Activated CD8-positive, alpha-beta T cell treated with anti-CD3 and anti-CD28 coated beads, Interleukin-2, amount 10 ng/mL, durations not matched to agents 7 days and 5 days (primary cell): ENCODE measurements at regions of chr2 and their contacts with region 1.

Region 1: DNA sequence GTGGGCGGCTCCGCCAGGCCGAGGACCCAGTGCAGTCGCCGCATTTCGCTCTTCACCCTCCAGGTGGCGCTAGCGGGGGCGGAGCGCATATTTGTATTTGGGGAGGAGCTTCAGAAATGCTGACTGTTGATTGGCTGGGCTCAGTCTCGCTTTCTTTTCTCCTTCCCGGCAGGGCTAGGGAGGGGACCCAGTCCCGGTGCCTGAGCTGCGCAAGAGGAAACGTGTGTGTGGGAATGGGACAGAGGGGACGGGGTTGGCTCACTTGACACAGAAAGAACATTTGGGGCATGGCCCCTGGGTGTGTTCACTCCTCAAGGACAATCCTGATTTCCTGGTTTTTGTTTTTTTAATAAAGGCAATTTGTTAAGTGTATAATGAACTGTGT is 20.3 kb upstream of the DNMT3A start:
- DNase-seq: peak; percentile 96
- ATAC-seq: peak; percentile 98
- H3K4me3 Mint-ChIP-seq: peak overlapping the region; percentile 82
- H3K27ac Mint-ChIP-seq: peak overlapping the region; percentile 93
- H3K4me1 Mint-ChIP-seq: peaks cover 20% of the 10 kb centered on the region
- H3K27me3 Mint-ChIP-seq: no peaks in the 10 kb centered on the region

Region 2: DNA sequence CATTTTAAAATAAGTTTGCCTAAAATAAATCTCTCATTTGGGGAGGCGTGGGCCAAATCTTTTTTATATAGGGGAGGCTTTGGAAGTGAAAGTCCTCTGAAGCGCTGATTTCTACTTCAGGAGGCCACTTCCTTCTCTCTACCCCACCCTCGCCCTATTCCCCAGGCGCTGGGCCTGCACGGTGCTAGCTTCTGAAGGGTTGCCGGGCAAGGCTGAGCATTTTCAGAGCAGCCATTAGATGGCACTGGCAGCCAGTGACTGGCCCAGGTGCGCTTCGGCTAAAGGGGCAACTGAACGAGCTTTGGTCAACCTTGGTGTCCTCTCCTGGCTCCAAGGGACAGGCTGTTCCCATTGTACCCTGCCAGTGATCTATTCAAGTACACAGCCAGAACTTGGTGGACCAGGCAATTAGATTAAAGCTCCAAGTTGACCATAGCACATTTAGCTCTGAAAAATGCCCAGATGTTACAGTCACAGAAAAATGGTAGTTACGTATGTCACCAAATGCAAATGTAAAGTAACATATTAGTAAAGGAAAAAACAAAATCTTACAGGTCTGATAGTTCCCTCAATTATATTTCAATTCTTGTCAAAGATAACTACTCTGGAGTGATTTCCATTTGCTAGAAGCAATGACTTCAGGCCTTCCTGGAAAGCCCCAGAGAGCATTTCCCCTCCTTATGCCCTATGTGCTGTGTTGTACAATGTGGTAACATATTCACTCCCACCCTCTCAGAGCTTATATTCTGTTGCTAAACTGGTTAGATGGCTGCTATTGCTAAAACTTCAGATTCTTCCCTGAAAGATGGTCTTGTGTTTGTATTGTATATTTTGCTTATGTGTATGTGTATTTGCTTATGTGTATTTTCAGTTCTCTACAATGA is 195.8 kb before region 1 on chr2:
- CTCF ChIA-PET with region 1: interaction called, 11 read pairs
- POLR2A ChIA-PET with region 1: no interaction called
- DNase-seq: peak; percentile 70
- ATAC-seq: peak; percentile 68
- H3K4me3 Mint-ChIP-seq: no peak overlapping the region
- H3K27ac Mint-ChIP-seq: no peak overlapping the region
- H3K4me1 Mint-ChIP-seq: peaks cover 27% of the 10 kb centered on the region
- H3K27me3 Mint-ChIP-seq: peaks cover 47% of the 10 kb centered on the region

Region 3: DNA sequence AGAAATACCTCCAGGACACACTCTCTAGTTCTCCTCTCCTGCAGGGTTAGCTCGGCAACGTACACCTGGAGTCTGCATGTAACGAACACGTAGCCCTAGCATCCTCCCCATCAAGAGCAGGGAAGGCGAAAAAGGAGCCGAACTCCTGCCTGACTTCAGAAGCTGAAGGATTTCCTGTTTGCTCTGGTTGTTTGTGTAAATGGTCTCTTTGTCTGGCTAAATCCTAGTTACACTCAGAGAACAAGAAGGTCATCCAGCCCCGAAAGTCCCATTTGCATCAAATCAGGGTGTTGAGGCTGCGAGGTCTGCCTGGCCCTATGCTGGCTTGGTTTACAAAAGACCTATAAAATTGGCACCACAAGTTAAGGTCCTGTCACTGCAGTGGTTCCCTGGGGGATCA is 127.3 kb before region 1 on chr2:
- CTCF ChIA-PET with region 1: no interaction called
- POLR2A ChIA-PET with region 1: no interaction called
- DNase-seq: no peak
- ATAC-seq: no peak
- H3K4me3 Mint-ChIP-seq: no peak overlapping the region
- H3K27ac Mint-ChIP-seq: no peak overlapping the region
- H3K4me1 Mint-ChIP-seq: no peaks in the 10 kb centered on the region
- H3K27me3 Mint-ChIP-seq: no peaks in the 10 kb centered on the region

Region 4: DNA sequence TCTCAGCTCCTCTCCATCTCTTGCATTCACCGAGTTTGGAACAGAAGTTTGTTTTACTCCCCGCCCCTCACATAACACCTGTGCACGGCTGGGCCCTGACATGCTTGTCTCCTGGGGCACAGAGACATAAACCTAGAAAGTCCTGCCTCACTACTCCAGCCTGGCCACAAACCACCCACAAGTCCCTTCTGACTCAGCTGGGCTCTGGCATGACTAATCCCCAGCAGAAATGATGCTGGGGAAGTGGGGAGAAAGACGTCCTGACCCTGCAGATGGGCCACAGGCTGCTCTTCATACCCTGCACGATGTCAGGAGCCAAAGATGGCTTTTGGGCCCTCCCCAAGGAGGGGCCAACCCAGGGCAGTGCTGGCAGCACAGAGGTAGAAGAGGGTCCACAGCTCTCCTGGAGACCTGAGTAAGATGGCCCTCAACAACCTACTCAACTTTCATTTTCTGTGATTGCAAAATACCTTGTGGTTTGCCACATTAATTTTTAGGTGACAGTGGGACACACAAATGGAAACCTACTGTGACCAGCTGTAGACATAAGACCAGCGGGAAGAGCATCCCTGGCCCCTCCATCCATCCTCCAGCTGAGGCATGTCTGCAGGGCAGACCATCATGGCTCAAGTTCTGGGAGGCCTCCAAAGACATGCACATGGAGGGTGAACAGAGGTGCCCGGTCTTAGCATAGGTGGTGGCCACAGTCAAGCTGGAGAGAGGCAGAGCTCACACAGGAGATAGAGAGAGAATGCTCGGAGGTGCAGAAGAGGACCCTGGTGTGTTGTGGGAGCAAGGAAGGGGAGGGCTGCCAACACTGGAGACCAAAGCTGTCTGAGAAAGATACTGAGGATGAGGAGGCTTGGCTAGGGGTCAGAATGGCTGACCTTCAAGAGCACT is 60.3 kb before region 1 on chr2:
- CTCF ChIA-PET with region 1: interaction called, 14 read pairs
- POLR2A ChIA-PET with region 1: interaction called, 4 read pairs
- DNase-seq: peak; percentile 86
- ATAC-seq: peak; percentile 89
- H3K4me3 Mint-ChIP-seq: peak overlapping the region; percentile 27
- H3K27ac Mint-ChIP-seq: peak overlapping the region; percentile 88
- H3K4me1 Mint-ChIP-seq: peaks cover 90% of the 10 kb centered on the region
- H3K27me3 Mint-ChIP-seq: no peaks in the 10 kb centered on the region

Region 5: DNA sequence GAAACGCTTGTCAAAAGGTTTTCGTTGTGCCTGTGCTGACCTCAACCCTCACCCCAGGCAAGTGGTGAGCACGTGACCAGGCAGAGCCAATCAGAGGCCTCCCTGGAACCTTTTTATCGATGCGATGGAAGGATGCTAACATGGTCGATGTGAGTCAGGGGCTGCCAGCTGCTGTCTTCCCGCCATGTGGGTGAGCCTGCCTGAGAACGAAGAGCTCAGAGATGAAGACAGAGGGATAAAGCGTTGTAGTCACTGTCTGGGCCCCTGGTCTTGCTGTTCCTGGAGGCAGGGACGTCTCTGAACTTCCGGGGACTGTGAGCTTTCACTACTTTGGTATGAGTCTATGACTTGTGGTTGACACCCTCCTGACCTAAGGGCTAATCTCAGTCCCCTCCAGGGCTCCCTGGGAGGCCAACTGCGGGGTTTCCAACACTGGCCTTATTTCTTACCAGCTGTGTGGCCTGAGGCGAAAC is 39.0 kb before region 1 on chr2:
- CTCF ChIA-PET with region 1: interaction called, 11 read pairs
- POLR2A ChIA-PET with region 1: interaction called, 12 read pairs
- DNase-seq: peak; percentile 56
- ATAC-seq: peak; percentile 69
- H3K4me3 Mint-ChIP-seq: peak overlapping the region; percentile 57
- H3K27ac Mint-ChIP-seq: peak overlapping the region; percentile 86
- H3K4me1 Mint-ChIP-seq: peaks cover 35% of the 10 kb centered on the region
- H3K27me3 Mint-ChIP-seq: no peaks in the 10 kb centered on the region

Region 6: GRCh38 chr2:25376750-25377621 is 14.9 kb after region 1 on chr2:
- CTCF ChIA-PET with region 1: interaction called, 97 read pairs
- POLR2A ChIA-PET with region 1: interaction called, 40 read pairs
- DNase-seq: peak; percentile 96
- ATAC-seq: peak; percentile 99
- H3K4me3 Mint-ChIP-seq: peak overlapping the region; percentile 71
- H3K27ac Mint-ChIP-seq: peak overlapping the region; percentile 97
- H3K4me1 Mint-ChIP-seq: peaks cover 40% of the 10 kb centered on the region
- H3K27me3 Mint-ChIP-seq: no peaks in the 10 kb centered on the region

Region 7: DNA sequence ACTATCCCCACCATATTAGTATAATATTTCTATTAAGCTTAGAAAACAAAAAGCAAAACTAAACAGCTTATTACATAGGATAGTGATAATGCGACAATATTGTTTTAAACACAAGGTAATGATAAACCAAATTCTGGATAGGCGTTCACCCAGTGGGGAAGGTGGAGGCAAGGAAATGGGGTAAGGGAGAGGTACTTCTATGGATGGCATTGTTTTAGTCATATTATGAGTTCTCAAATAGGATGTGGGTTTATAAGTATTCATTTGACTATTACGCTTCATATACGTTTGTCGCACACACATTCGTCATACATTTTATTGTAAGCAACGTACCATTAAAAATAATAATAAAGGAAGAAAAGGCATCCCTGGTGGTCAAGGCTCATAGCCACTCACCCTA is 68.5 kb after region 1 on chr2:
- CTCF ChIA-PET with region 1: no interaction called
- POLR2A ChIA-PET with region 1: no interaction called
- DNase-seq: no peak
- ATAC-seq: no peak
- H3K4me3 Mint-ChIP-seq: no peak overlapping the region
- H3K27ac Mint-ChIP-seq: no peak overlapping the region
- H3K4me1 Mint-ChIP-seq: peaks cover 11% of the 10 kb centered on the region
- H3K27me3 Mint-ChIP-seq: no peaks in the 10 kb centered on the region

Region 8: DNA sequence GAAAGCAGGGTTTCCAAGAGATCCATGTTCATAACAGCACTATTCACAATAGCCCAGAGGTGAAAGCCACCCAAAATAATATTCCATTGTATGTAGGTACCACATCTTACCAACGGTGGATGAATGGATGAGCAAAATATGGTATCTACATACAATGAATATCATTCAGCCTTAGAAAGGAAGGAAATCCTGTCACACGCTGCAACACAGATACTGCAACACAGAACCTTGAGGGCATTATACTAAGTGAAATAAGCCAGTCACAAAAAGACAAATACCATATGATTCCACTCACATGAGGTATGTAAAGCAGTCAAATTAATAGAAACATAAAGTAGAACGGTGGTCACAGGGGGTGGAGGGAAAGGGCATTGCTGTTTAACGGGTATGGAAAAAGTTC is 155.7 kb after region 1 on chr2:
- CTCF ChIA-PET with region 1: interaction called, 11 read pairs
- POLR2A ChIA-PET with region 1: interaction called, 6 read pairs
- DNase-seq: no peak
- ATAC-seq: no peak
- H3K4me3 Mint-ChIP-seq: no peak overlapping the region
- H3K27ac Mint-ChIP-seq: no peak overlapping the region
- H3K4me1 Mint-ChIP-seq: peaks cover 30% of the 10 kb centered on the region
- H3K27me3 Mint-ChIP-seq: no peaks in the 10 kb centered on the region